GM12878 (cell line): ENCODE measurements at regions of chr17 and their contacts with region 1.

Region 1: GRCh38 chr17:82648166-82648668 is at the start of gene WDR45B:
- DNase-seq: peak; percentile 80
- ATAC-seq: peak; percentile 92
- H3K4me3 ChIP-seq: peak within 1 kb of the TSS; percentile 97
- H3K27ac ChIP-seq: peak within 1 kb of the TSS; percentile 55
- H3K4me1 ChIP-seq: no peaks in the 10 kb centered on the region
- H3K27me3 ChIP-seq: no peaks in the 10 kb centered on the region
- CTCF ChIP-seq: no peak
- EP300 ChIP-seq: no peak
- POLR2A ChIP-seq: peak; percentile 97
- RAD21 ChIP-seq: no peak
- polyA plus RNA-seq, gene WDR45B: 1.0 to 2.5 TPM

Region 2: GRCh38 chr17:82751571-82752370 is 103.6 kb after region 1 on chr17 and contains the start of gene TBCD:
- CTCF ChIA-PET with region 1: no interaction called
- POLR2A ChIA-PET with region 1: no interaction called
- RAD21 ChIA-PET with region 1: no interaction called
- SMC1A ChIA-PET with region 1: no interaction called
- in situ Hi-C with region 1: loop called (anchors 10 kb)
- intact Hi-C with region 1: loop called (anchors 10 kb)
- DNase-seq: peak; percentile 23
- ATAC-seq: peak; percentile 89
- H3K4me3 ChIP-seq: peak within 1 kb of the TSS; percentile 100
- H3K27ac ChIP-seq: peak within 1 kb of the TSS; percentile 76
- H3K4me1 ChIP-seq: 0 out of 2 replicates have a peak, but pooled peaks cover 2% of the 10 kb centered on the region
- H3K27me3 ChIP-seq: no peaks in the 10 kb centered on the region
- CTCF ChIP-seq: no peak
- EP300 ChIP-seq: no peak
- POLR2A ChIP-seq: peak; percentile 61
- RAD21 ChIP-seq: no peak
- polyA plus RNA-seq, gene TBCD: 10.3 to 19.3 TPM